Thyroid gland (tissue), 4 donors: ENCODE measurements at regions of chr2 and their contacts with region 1.

Region 1: GRCh38 chr2:24827321-24828237 is 34.4 kb downstream of the CENPO start:
- DNase-seq: peak; percentile 86
- H3K4me3 ChIP-seq: no peak overlapping the region
- H3K27ac ChIP-seq: no peak overlapping the region
- H3K4me1 ChIP-seq: peaks cover 17 to 25% of the 10 kb centered on the region in 2 donors
- H3K27me3 ChIP-seq: no peaks in the 10 kb centered on the region
- CTCF ChIP-seq: peak; percentile 84 to 93 (median 90)
- POLR2A ChIP-seq: no peak

Region 2: GRCh38 chr2:24409700-24410556 is 417.7 kb before region 1 on chr2:
- intact Hi-C with region 1: loop called (anchors 2 kb)
- DNase-seq: peak; percentile 25 to 34
- H3K4me3 ChIP-seq: no peak overlapping the region
- H3K27ac ChIP-seq: no peak overlapping the region
- H3K4me1 ChIP-seq: no peaks in the 10 kb centered on the region
- H3K27me3 ChIP-seq: no peaks in the 10 kb centered on the region
- CTCF ChIP-seq: peak; percentile 49 to 88 (median 79)
- POLR2A ChIP-seq: no peak

Region 3: GRCh38 chr2:24881158-24882022 is 53.8 kb after region 1 on chr2:
- intact Hi-C with region 1: no loop called
- DNase-seq: no peak
- H3K4me3 ChIP-seq: no peak overlapping the region
- H3K27ac ChIP-seq: no peak overlapping the region
- H3K4me1 ChIP-seq: peaks cover 5% of the 10 kb centered on the region in 2 donors
- H3K27me3 ChIP-seq: no peaks in the 10 kb centered on the region
- CTCF ChIP-seq: no peak
- POLR2A ChIP-seq: no peak

Region 4: DNA sequence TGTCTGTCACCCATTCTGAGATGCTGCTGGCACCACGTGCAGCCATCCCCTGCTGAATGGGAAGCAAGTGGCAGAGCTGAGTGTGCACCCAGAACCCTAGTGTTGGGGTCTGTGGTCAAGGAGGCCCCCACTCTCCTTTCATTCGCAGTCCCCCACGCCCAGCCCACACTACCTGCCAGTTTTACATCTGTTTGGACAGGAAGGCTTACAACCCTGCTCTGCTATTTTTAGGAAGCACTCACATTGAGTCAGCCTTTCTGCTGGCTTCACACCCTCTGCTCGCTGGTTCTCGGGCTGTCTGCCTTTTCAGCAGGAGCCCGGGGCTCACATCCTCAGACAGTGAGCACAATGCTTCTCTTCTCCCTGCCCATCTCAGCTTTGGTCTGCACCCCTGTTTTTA is 103.2 kb after region 1 on chr2:
- intact Hi-C with region 1: no loop called
- DNase-seq: no peak
- H3K4me3 ChIP-seq: no peak overlapping the region
- H3K27ac ChIP-seq: no peak overlapping the region
- H3K4me1 ChIP-seq: no peaks in the 10 kb centered on the region
- H3K27me3 ChIP-seq: no peaks in the 10 kb centered on the region
- CTCF ChIP-seq: no peak
- POLR2A ChIP-seq: no peak